Activated naive CD4-positive, alpha-beta T cell treated with anti-CD3 and anti-CD28 coated beads for 36 hours (primary cell): ENCODE measurements at regions of chr1 and their contacts with region 1.

Region 1: GRCh38 chr1:198823626-198824025 is 184.8 kb downstream of the PTPRC start:
- DNase-seq: no peak
- H3K4me3 Mint-ChIP-seq: no peak overlapping the region
- H3K27ac Mint-ChIP-seq: no peak overlapping the region
- H3K4me1 Mint-ChIP-seq: no peaks in the 10 kb centered on the region
- H3K27me3 Mint-ChIP-seq: no peaks in the 10 kb centered on the region

Region 2: GRCh38 chr1:198754670-198755069 is 69.0 kb before region 1 on chr1:
- CTCF ChIA-PET with region 1: no interaction called
- intact Hi-C with region 1: no loop called
- DNase-seq: no peak
- H3K4me3 Mint-ChIP-seq: no peak overlapping the region
- H3K27ac Mint-ChIP-seq: peak overlapping the region; percentile 78
- H3K4me1 Mint-ChIP-seq: peaks cover 8% of the 10 kb centered on the region
- H3K27me3 Mint-ChIP-seq: no peaks in the 10 kb centered on the region

Region 3: DNA sequence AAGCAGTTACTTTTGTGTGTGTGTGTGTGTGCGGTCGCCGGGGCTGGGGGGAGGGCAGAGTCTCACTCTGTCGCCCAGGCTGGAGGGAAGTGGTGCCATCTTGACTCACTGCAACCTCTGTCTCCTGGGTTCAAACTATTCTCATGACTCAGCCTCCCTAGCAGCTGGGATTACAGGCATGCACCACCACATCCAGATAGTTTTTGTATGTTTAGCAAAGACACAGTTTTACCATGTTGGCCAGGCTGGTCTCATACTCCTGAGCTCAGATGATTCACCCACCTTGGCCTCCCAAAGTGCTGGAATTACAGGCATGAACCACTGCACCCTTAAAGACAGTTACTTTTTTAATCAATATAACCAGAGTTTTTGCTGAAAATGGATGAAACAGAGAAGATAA is 22.2 kb after region 1 on chr1:
- CTCF ChIA-PET with region 1: no interaction called
- intact Hi-C with region 1: no loop called
- DNase-seq: no peak
- H3K4me3 Mint-ChIP-seq: no peak overlapping the region
- H3K27ac Mint-ChIP-seq: no peak overlapping the region
- H3K4me1 Mint-ChIP-seq: no peaks in the 10 kb centered on the region
- H3K27me3 Mint-ChIP-seq: no peaks in the 10 kb centered on the region

Region 4: GRCh38 chr1:198959032-198959431 is 135.4 kb after region 1 on chr1:
- CTCF ChIA-PET with region 1: no interaction called
- intact Hi-C with region 1: loop called (anchors 5 kb)
- DNase-seq: no peak
- H3K4me3 Mint-ChIP-seq: no peak overlapping the region
- H3K27ac Mint-ChIP-seq: peak overlapping the region; percentile 10
- H3K4me1 Mint-ChIP-seq: peaks cover 24% of the 10 kb centered on the region
- H3K27me3 Mint-ChIP-seq: no peaks in the 10 kb centered on the region